ENCODE measurements at regions of chr1 and their contacts with region 1.

Region 1: DNA sequence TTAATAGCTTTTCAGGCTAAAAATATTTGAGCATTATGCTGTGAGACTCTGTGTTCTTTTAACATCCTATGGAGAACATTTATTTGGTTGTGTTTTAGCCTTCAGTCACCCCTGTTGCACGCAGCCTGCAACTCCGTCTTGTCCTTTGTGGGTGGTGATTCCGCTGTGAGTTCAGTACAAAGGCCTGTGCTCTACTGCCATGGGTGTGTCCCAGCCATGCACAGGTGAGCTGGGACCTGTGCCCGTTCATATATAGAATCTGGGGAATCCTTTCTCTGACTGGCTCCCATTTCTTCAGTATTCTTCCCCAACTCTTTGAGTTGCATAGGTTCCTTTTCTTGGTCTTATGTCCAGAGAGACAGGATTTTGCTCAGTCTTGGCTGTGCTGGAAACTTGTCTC is 61.4 kb downstream of the ACTL8 start:
- DNase-seq: no peak

Region 2: GRCh38 chr1:17887661-17888371 is 71.3 kb after region 1 on chr1:
- intact Hi-C with region 1: loop called in 1 of 2 experiments (anchors 2 kb)
- DNase-seq: peak; percentile 64